PC-3 (cell line): ENCODE measurements at regions of chr1 and their contacts with region 1.

Region 1: DNA sequence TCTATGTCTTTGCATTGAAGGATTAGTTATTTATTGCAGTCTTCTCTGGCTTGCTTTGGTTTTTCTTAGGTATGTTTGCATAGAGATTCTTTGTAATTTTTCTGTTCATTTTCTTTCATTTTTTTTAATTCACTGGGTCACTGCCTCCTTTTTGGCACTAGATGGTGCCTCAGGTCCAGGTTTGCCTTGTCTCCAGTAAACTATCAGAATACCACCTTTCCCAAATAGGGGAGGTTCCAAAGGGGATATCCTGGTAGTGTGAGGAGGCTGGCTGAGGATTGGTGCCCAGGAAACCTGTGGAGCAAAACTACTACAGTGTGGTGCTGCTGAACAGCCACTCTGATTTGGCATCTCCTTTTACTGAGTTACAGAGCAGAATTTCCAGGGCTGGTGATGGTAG is 257.1 kb downstream of the KCTD3 start:
- DNase-seq: peak; percentile 59
- ATAC-seq: peak; percentile 81
- H3K4me3 ChIP-seq: no peak overlapping the region
- H3K27ac ChIP-seq: no peak overlapping the region
- H3K4me1 ChIP-seq: no peaks in the 10 kb centered on the region
- H3K27me3 ChIP-seq: peaks cover 22% of the 10 kb centered on the region
- CTCF ChIP-seq: peak; percentile 97

Region 2: DNA sequence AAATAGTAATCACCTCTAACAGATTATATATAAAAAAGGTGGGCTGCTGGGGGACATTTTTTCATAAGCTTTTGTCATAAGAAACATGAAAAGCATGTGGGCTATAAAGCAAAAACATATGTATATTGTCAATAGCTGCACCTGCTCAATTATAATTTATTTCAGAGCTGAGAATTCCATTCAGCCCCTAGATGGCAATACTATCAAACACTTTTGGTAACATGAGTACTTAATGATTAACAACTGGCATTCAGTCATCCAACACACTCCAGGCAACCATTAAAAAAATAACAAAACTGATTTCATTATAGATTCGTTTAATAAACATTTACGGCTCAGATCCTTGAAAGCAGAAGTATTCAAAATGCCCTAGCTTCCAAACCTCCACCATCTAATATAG is 142.0 kb before region 1 on chr1:
- CTCF ChIA-PET with region 1: no interaction called
- POLR2A ChIA-PET with region 1: no interaction called
- intact Hi-C with region 1: loop called (anchors 2 kb)
- DNase-seq: peak; percentile 74
- ATAC-seq: peak; percentile 82
- H3K4me3 ChIP-seq: no peak overlapping the region
- H3K27ac ChIP-seq: no peak overlapping the region
- H3K4me1 ChIP-seq: no peaks in the 10 kb centered on the region
- H3K27me3 ChIP-seq: peaks cover 45% of the 10 kb centered on the region
- CTCF ChIP-seq: peak; percentile 79

Region 3: GRCh38 chr1:215963621-215964020 is 139.4 kb after region 1 on chr1:
- CTCF ChIA-PET with region 1: no interaction called
- POLR2A ChIA-PET with region 1: no interaction called
- intact Hi-C with region 1: loop called (anchors 2 kb)
- DNase-seq: no peak
- ATAC-seq: no peak
- H3K4me3 ChIP-seq: no peak overlapping the region
- H3K27ac ChIP-seq: no peak overlapping the region
- H3K4me1 ChIP-seq: no peaks in the 10 kb centered on the region
- H3K27me3 ChIP-seq: peaks cover 68% of the 10 kb centered on the region
- CTCF ChIP-seq: no peak

Region 4: GRCh38 chr1:215992620-215993019 is 168.4 kb after region 1 on chr1:
- CTCF ChIA-PET with region 1: no interaction called
- POLR2A ChIA-PET with region 1: no interaction called
- intact Hi-C with region 1: loop called (anchors 1 kb)
- DNase-seq: peak; percentile 72
- ATAC-seq: peak; percentile 82
- H3K4me3 ChIP-seq: no peak overlapping the region
- H3K27ac ChIP-seq: no peak overlapping the region
- H3K4me1 ChIP-seq: no peaks in the 10 kb centered on the region
- H3K27me3 ChIP-seq: peaks cover 58% of the 10 kb centered on the region
- CTCF ChIP-seq: peak; percentile 83

Region 5: GRCh38 chr1:216119602-216120001 is 295.4 kb after region 1 on chr1:
- CTCF ChIA-PET with region 1: no interaction called
- POLR2A ChIA-PET with region 1: no interaction called
- intact Hi-C with region 1: loop called (anchors 1 kb)
- DNase-seq: peak; percentile 75
- ATAC-seq: peak; percentile 93
- H3K4me3 ChIP-seq: no peak overlapping the region
- H3K27ac ChIP-seq: no peak overlapping the region
- H3K4me1 ChIP-seq: no peaks in the 10 kb centered on the region
- H3K27me3 ChIP-seq: peaks cover 47% of the 10 kb centered on the region
- CTCF ChIP-seq: peak; percentile 87

Region 6: DNA sequence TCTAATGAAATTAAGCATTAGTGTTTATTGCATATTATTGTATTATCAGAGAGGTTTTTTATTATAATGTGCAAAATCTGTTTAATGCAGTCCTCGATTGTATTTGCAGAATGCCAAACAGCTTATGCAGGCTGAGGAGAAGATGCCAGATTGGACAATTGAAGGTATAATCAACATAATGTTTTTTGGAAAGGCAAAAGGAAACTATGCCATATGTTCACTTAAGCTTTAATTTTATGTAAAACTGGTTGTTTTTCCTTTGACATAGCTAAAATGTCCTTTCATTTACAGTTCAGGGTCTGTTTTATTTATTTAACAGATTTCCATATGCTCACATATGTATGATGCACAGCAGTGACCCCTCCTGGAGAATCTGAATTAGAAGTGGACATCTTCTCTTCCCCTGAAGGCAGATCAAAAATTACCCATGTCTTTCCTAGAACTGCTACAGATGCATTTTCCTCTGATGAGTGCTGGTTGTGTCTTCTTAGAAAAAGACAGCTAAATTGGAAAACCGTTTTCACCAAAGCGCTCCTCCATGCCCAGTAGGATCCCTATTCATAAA is 742.5 kb after region 1 on chr1:
- CTCF ChIA-PET with region 1: no interaction called
- POLR2A ChIA-PET with region 1: no interaction called
- intact Hi-C with region 1: loop called (anchors 5 kb)
- DNase-seq: peak; percentile 82
- ATAC-seq: peak; percentile 85
- H3K4me3 ChIP-seq: no peak overlapping the region
- H3K27ac ChIP-seq: no peak overlapping the region
- H3K4me1 ChIP-seq: no peaks in the 10 kb centered on the region
- H3K27me3 ChIP-seq: peaks cover 27% of the 10 kb centered on the region
- CTCF ChIP-seq: peak; percentile 95